B cell (primary cell): ENCODE measurements at regions of chr1 and their contacts with region 1.

Region 1: DNA sequence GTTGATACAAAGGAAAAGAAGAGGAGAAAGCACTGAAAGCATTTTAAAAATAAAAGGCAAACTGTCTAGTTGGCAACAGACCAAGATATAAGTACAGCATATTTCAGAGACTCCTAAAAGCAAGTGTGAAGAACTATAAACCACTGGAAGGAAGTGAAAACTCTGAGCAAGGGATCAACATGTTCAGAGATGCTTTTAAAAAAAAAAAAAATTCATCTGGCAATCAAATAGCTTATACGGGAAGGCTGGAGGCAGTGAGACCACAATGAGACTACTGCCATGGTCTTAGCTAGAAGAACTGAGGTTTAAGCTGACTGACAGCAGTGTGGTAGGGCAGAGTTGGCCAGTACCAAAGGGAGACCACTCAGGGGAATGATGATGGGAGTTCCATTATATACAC is 124.3 kb downstream of the VAV3 start:
- DNase-seq: peak; percentile 50
- ATAC-seq: peak; percentile 50
- H3K4me3 ChIP-seq: peak overlapping the region in 2 of 5 experiments; percentile 22 to 45
- H3K4me3 Mint-ChIP-seq: peak overlapping the region; percentile 76
- H3K27ac ChIP-seq: peak overlapping the region; percentile 43 to 64
- H3K27ac Mint-ChIP-seq: peak overlapping the region; percentile 85
- H3K4me1 ChIP-seq: peaks cover 78 to 93% of the 10 kb centered on the region in 2 donors
- H3K4me1 Mint-ChIP-seq: peaks cover 92% of the 10 kb centered on the region
- H3K27me3 ChIP-seq: no peaks in the 10 kb centered on the region
- H3K27me3 Mint-ChIP-seq: no peaks in the 10 kb centered on the region
- CTCF ChIP-seq: no peak

Region 2: GRCh38 chr1:107804134-107804533 is 36.6 kb before region 1 on chr1:
- CTCF ChIA-PET with region 1: interaction called, 3 read pairs
- POLR2A ChIA-PET with region 1: no interaction called
- intact Hi-C with region 1: loop called (anchors 2 kb)
- DNase-seq: peak; percentile 62
- ATAC-seq: peak; percentile 61
- H3K4me3 ChIP-seq: peak overlapping the region; percentile 35 to 76 (median 47)
- H3K4me3 Mint-ChIP-seq: peak overlapping the region; percentile 80
- H3K27ac ChIP-seq: peak overlapping the region; percentile 79 to 88
- H3K27ac Mint-ChIP-seq: peak overlapping the region; percentile 90
- H3K4me1 ChIP-seq: peaks cover 58 to 86% of the 10 kb centered on the region in 2 donors
- H3K4me1 Mint-ChIP-seq: peaks cover 91% of the 10 kb centered on the region
- H3K27me3 ChIP-seq: no peaks in the 10 kb centered on the region
- H3K27me3 Mint-ChIP-seq: no peaks in the 10 kb centered on the region
- CTCF ChIP-seq: no peak

Region 3: GRCh38 chr1:107829061-107830040 is 11.4 kb before region 1 on chr1:
- CTCF ChIA-PET with region 1: interaction called, 6 read pairs
- POLR2A ChIA-PET with region 1: no interaction called
- intact Hi-C with region 1: loop called (anchors 1 kb)
- DNase-seq: peak; percentile 63
- ATAC-seq: peak; percentile 88
- H3K4me3 ChIP-seq: peak overlapping the region in 3 of 5 experiments; percentile 4 to 54 (median 5)
- H3K4me3 Mint-ChIP-seq: peak overlapping the region; percentile 65
- H3K27ac ChIP-seq: peak overlapping the region; percentile 58 to 82
- H3K27ac Mint-ChIP-seq: peak overlapping the region; percentile 88
- H3K4me1 ChIP-seq: peaks cover 70 to 94% of the 10 kb centered on the region in 2 donors
- H3K4me1 Mint-ChIP-seq: peaks cover 81% of the 10 kb centered on the region
- H3K27me3 ChIP-seq: no peaks in the 10 kb centered on the region
- H3K27me3 Mint-ChIP-seq: no peaks in the 10 kb centered on the region
- CTCF ChIP-seq: no peak

Region 4: DNA sequence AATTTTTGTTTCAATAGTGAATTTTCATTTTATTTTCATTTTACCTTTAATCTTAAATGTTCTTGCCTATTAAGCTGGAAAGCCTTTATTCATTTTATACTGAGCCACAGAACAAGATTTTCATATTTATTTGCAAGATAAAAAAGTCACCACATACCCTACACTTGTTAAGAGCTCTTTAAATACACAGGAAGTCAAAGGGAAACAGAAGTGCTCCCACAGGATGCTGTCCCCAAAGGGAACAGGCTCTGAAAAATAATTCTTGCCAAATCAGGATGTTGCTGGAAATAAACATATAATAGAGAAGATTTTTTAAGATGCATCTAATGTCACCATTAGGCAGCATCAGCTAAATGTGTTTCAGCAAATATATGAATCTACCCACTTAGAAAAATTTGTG is 10.7 kb after region 1 on chr1:
- CTCF ChIA-PET with region 1: interaction called, 3 read pairs
- POLR2A ChIA-PET with region 1: no interaction called
- intact Hi-C with region 1: loop called (anchors 2 kb)
- DNase-seq: no peak
- ATAC-seq: no peak
- H3K4me3 ChIP-seq: no peak overlapping the region
- H3K4me3 Mint-ChIP-seq: no peak overlapping the region
- H3K27ac ChIP-seq: no peak overlapping the region
- H3K27ac Mint-ChIP-seq: no peak overlapping the region
- H3K4me1 ChIP-seq: peaks cover 15 to 23% of the 10 kb centered on the region in 2 donors
- H3K4me1 Mint-ChIP-seq: peaks cover 65% of the 10 kb centered on the region
- H3K27me3 ChIP-seq: no peaks in the 10 kb centered on the region
- H3K27me3 Mint-ChIP-seq: no peaks in the 10 kb centered on the region
- CTCF ChIP-seq: no peak

Region 5: GRCh38 chr1:107870696-107871095 is 30.0 kb after region 1 on chr1:
- CTCF ChIA-PET with region 1: no interaction called
- POLR2A ChIA-PET with region 1: no interaction called
- intact Hi-C with region 1: loop called (anchors 2 kb)
- DNase-seq: no peak
- ATAC-seq: no peak
- H3K4me3 ChIP-seq: no peak overlapping the region
- H3K4me3 Mint-ChIP-seq: peak overlapping the region; percentile 10
- H3K27ac ChIP-seq: peak overlapping the region; percentile 23 to 86
- H3K27ac Mint-ChIP-seq: peak overlapping the region; percentile 61
- H3K4me1 ChIP-seq: peaks cover 61 to 74% of the 10 kb centered on the region in 2 donors
- H3K4me1 Mint-ChIP-seq: peaks cover 90% of the 10 kb centered on the region
- H3K27me3 ChIP-seq: no peaks in the 10 kb centered on the region
- H3K27me3 Mint-ChIP-seq: no peaks in the 10 kb centered on the region
- CTCF ChIP-seq: no peak

Region 6: GRCh38 chr1:107877092-107877491 is 36.4 kb after region 1 on chr1:
- CTCF ChIA-PET with region 1: interaction called, 4 read pairs
- POLR2A ChIA-PET with region 1: no interaction called
- intact Hi-C with region 1: loop called (anchors 2 kb)
- DNase-seq: no peak
- ATAC-seq: peak; percentile 53
- H3K4me3 ChIP-seq: peak overlapping the region in 1 of 5 experiments; percentile 17
- H3K4me3 Mint-ChIP-seq: peak overlapping the region; percentile 56
- H3K27ac ChIP-seq: no peak overlapping the region
- H3K27ac Mint-ChIP-seq: no peak overlapping the region
- H3K4me1 ChIP-seq: peaks cover 47 to 61% of the 10 kb centered on the region in 2 donors
- H3K4me1 Mint-ChIP-seq: peaks cover 77% of the 10 kb centered on the region
- H3K27me3 ChIP-seq: no peaks in the 10 kb centered on the region
- H3K27me3 Mint-ChIP-seq: no peaks in the 10 kb centered on the region
- CTCF ChIP-seq: no peak

Region 7: GRCh38 chr1:107949467-107950253 is 108.9 kb after region 1 on chr1:
- CTCF ChIA-PET with region 1: no interaction called
- POLR2A ChIA-PET with region 1: no interaction called
- intact Hi-C with region 1: no loop called
- DNase-seq: no peak
- ATAC-seq: no peak
- H3K4me3 ChIP-seq: no peak overlapping the region
- H3K4me3 Mint-ChIP-seq: peak overlapping the region; percentile 2
- H3K27ac ChIP-seq: peak overlapping the region in 1 of 2 donors; percentile 44
- H3K27ac Mint-ChIP-seq: peak overlapping the region; percentile 70
- H3K4me1 ChIP-seq: peaks cover 44 to 75% of the 10 kb centered on the region in 2 donors
- H3K4me1 Mint-ChIP-seq: peaks cover 75% of the 10 kb centered on the region
- H3K27me3 ChIP-seq: no peaks in the 10 kb centered on the region
- H3K27me3 Mint-ChIP-seq: no peaks in the 10 kb centered on the region
- CTCF ChIP-seq: no peak

Region 8: GRCh38 chr1:108049178-108049819 is 208.6 kb after region 1 on chr1:
- CTCF ChIA-PET with region 1: no interaction called
- POLR2A ChIA-PET with region 1: no interaction called
- intact Hi-C with region 1: no loop called
- DNase-seq: peak; percentile 52
- ATAC-seq: peak; percentile 60
- H3K4me3 ChIP-seq: no peak overlapping the region
- H3K4me3 Mint-ChIP-seq: no peak overlapping the region
- H3K27ac ChIP-seq: no peak overlapping the region
- H3K27ac Mint-ChIP-seq: no peak overlapping the region
- H3K4me1 ChIP-seq: peaks cover 27 to 35% of the 10 kb centered on the region in 2 donors
- H3K4me1 Mint-ChIP-seq: peaks cover 28% of the 10 kb centered on the region
- H3K27me3 ChIP-seq: no peaks in the 10 kb centered on the region
- H3K27me3 Mint-ChIP-seq: no peaks in the 10 kb centered on the region
- CTCF ChIP-seq: peak; percentile 72

Region 9: GRCh38 chr1:108125312-108126138 is 284.8 kb after region 1 on chr1:
- CTCF ChIA-PET with region 1: interaction called, 11 read pairs
- POLR2A ChIA-PET with region 1: no interaction called
- intact Hi-C with region 1: loop called (anchors 1 kb)
- DNase-seq: peak; percentile 85
- ATAC-seq: peak; percentile 92
- H3K4me3 ChIP-seq: no peak overlapping the region
- H3K4me3 Mint-ChIP-seq: no peak overlapping the region
- H3K27ac ChIP-seq: no peak overlapping the region
- H3K27ac Mint-ChIP-seq: no peak overlapping the region
- H3K4me1 ChIP-seq: peaks cover 5 to 8% of the 10 kb centered on the region in 2 donors
- H3K4me1 Mint-ChIP-seq: peaks cover 4% of the 10 kb centered on the region
- H3K27me3 ChIP-seq: no peaks in the 10 kb centered on the region
- H3K27me3 Mint-ChIP-seq: peaks cover under 1% of the 10 kb centered on the region
- CTCF ChIP-seq: peak; percentile 96